ENCODE measurements at regions of chr15 and their contacts with region 1.

Region 1: GRCh38 chr15:44319385-44319784 is 30.9 kb downstream of the GOLM2 start:
- DNase-seq: peak; percentile 49
- CTCF ChIP-seq: peak; percentile 76

Region 2: DNA sequence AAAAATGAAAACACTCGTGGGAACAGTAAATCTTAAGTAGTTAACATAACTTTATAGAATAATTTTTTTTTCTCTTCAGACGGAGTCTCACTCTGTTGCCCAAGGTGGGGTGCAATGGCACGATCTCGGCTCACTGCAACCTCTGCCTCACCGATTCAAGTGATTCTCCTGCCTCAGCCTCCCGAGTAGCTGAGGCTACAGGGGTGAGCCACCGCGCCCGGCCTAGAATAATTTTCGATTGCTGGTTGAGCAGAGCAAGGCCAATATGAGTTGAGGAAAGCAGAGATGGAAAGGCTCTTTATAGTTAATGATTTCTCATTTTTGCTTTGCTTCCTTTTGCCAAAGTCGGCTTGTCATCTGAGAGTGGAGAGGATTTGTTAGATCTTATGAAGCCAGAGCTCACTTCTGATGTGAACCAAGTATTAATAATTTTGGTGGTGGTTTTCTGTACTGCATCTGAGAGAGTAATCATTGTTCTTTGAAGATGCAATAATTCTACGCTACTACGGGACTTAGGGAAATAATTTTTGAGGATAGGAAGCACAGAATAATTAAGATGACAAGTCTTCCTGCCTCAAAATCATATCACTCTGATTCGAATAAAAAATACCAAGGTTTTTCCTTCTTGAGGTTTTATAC is 32.5 kb before region 1 on chr15:
- CTCF ChIA-PET with region 1: interaction called, 18 read pairs
- POLR2A ChIA-PET with region 1: no interaction called
- DNase-seq: no peak
- CTCF ChIP-seq: no peak

Region 3: GRCh38 chr15:44296625-44297524 is 22.5 kb before region 1 on chr15:
- CTCF ChIA-PET with region 1: interaction called, 10 read pairs
- POLR2A ChIA-PET with region 1: no interaction called
- DNase-seq: peak; percentile 23
- CTCF ChIP-seq: no peak

Region 4: GRCh38 chr15:44308415-44308814 is 11.0 kb before region 1 on chr15:
- CTCF ChIA-PET with region 1: interaction called, 49 read pairs
- POLR2A ChIA-PET with region 1: no interaction called
- DNase-seq: peak; percentile 54
- CTCF ChIP-seq: no peak

Measured in GM10248 (cell line).